Activated CD8-positive, alpha-beta T cell treated with anti-CD3 and anti-CD28 coated beads, Interleukin-2, amount 10 ng/mL, durations not matched to agents 7 days and 5 days (primary cell): ENCODE measurements at regions of chr7 and their contacts with region 1.

Region 1: DNA sequence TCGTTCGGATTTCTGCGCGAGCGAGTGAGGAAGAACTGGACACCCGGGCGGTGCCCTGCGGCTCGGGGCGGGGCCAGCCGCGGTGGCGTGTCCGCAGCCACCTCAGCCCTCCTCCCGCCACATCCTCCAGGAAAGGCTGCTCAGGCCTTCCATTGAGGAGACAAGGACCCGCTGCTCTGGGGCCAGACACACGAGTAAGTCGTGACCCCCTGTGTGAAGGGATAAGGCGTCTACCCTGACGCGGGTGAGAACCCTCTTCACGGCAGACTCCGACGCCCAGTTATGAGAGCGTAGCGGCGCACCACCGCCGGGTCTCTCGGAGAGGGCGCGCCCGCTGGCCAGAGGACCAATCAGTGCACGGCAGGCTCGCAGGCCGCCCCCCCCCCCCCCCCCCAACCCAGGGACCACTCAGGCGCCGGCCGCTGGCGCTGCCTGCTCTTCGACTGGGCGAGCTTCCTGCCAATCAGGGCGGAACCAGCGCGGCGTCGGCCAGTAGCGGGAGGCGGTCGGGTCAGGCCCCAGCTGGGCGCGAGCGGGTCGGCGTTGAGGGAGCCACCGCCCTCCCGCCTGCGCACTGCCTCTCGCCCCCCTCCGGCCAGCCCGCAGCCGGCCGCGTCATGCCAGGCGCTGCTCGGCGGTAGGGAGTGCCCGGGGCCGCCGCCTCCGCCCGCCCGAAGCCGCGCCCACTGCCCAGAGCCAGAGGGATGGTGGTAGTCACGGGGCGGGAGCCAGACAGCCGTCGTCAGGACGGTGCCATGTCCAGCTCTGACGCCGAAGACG is at the start of gene KCTD7:
- DNase-seq: peak; percentile 96
- ATAC-seq: peak; percentile 96
- H3K4me3 Mint-ChIP-seq: peak within 1 kb of the TSS; percentile 84
- H3K27ac Mint-ChIP-seq: peak within 1 kb of the TSS; percentile 91
- H3K4me1 Mint-ChIP-seq: peaks cover 53% of the 10 kb centered on the region
- H3K27me3 Mint-ChIP-seq: peaks cover 7% of the 10 kb centered on the region
- total RNA-seq, gene KCTD7: 31.1 to 32.6 TPM

Region 2: GRCh38 chr7:66557608-66558143 is 70.9 kb before region 1 on chr7:
- CTCF ChIA-PET with region 1: interaction called, 10 read pairs
- POLR2A ChIA-PET with region 1: interaction called, 3 read pairs
- DNase-seq: peak; percentile 76
- ATAC-seq: peak; percentile 78
- H3K4me3 Mint-ChIP-seq: no peak overlapping the region
- H3K27ac Mint-ChIP-seq: no peak overlapping the region
- H3K4me1 Mint-ChIP-seq: peaks cover 5% of the 10 kb centered on the region
- H3K27me3 Mint-ChIP-seq: no peaks in the 10 kb centered on the region

Region 3: GRCh38 chr7:66583490-66584110 is 45.0 kb before region 1 on chr7:
- CTCF ChIA-PET with region 1: no interaction called
- POLR2A ChIA-PET with region 1: no interaction called
- DNase-seq: no peak
- ATAC-seq: no peak
- H3K4me3 Mint-ChIP-seq: no peak overlapping the region
- H3K27ac Mint-ChIP-seq: peak overlapping the region; percentile 57
- H3K4me1 Mint-ChIP-seq: peaks cover 33% of the 10 kb centered on the region
- H3K27me3 Mint-ChIP-seq: no peaks in the 10 kb centered on the region

Region 4: DNA sequence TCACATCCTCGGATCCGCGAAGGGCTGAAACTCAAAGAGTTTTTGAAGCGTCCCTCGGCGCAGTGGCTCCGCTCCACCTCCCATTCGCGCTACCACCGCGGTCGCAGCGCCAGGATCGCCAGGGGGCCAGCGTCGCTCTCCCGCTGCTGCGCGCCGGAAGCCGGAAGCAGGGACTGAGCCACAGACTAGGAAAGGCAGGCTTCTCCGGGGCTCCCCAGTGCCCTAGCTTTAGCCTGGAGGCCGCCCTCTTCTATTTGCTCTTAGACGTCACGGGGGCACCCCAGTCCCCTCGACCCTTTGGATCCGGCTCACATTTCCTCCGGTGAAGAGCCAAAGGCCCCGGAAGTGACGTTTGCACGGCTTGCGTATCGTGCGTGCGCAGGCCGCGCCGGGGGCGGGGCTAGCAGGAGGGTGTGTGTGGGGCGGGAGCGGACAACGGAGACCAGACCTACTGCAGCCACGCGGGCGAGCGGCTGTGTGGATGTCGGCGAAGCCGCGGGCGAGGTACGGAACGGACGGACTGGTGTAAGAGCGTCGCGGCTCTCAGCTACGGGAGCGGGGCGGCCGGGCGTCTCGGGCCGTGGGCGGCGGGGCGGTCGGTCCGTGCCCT is 25.7 kb after region 1 on chr7:
- CTCF ChIA-PET with region 1: no interaction called
- POLR2A ChIA-PET with region 1: interaction called, 14 read pairs
- DNase-seq: peak; percentile 98
- ATAC-seq: peak; percentile 96
- H3K4me3 Mint-ChIP-seq: peak overlapping the region; percentile 98
- H3K27ac Mint-ChIP-seq: peak overlapping the region; percentile 99
- H3K4me1 Mint-ChIP-seq: peaks cover 26% of the 10 kb centered on the region
- H3K27me3 Mint-ChIP-seq: no peaks in the 10 kb centered on the region